Activated CD4-positive, alpha-beta T cell treated with anti-CD3 and anti-CD28 coated beads for 36 hours (primary cell): ENCODE measurements at regions of chr17 and their contacts with region 1.

Region 1: GRCh38 chr17:17641621-17642409 is 39.4 kb upstream of the RAI1 start:
- DNase-seq: peak; percentile 90
- ATAC-seq: peak; percentile 96
- H3K4me3 Mint-ChIP-seq: no peak overlapping the region
- H3K27ac Mint-ChIP-seq: no peak overlapping the region
- H3K4me1 Mint-ChIP-seq: no peaks in the 10 kb centered on the region
- H3K27me3 Mint-ChIP-seq: no peaks in the 10 kb centered on the region

Region 2: GRCh38 chr17:17001874-17002520 is 639.8 kb before region 1 on chr17:
- CTCF ChIA-PET with region 1: no interaction called
- POLR2A ChIA-PET with region 1: no interaction called
- intact Hi-C with region 1: loop called in 1 of 2 experiments (anchors 5 kb)
- DNase-seq: peak; percentile 88
- ATAC-seq: peak; percentile 98
- H3K4me3 Mint-ChIP-seq: no peak overlapping the region
- H3K27ac Mint-ChIP-seq: no peak overlapping the region
- H3K4me1 Mint-ChIP-seq: no peaks in the 10 kb centered on the region
- H3K27me3 Mint-ChIP-seq: no peaks in the 10 kb centered on the region

Region 3: DNA sequence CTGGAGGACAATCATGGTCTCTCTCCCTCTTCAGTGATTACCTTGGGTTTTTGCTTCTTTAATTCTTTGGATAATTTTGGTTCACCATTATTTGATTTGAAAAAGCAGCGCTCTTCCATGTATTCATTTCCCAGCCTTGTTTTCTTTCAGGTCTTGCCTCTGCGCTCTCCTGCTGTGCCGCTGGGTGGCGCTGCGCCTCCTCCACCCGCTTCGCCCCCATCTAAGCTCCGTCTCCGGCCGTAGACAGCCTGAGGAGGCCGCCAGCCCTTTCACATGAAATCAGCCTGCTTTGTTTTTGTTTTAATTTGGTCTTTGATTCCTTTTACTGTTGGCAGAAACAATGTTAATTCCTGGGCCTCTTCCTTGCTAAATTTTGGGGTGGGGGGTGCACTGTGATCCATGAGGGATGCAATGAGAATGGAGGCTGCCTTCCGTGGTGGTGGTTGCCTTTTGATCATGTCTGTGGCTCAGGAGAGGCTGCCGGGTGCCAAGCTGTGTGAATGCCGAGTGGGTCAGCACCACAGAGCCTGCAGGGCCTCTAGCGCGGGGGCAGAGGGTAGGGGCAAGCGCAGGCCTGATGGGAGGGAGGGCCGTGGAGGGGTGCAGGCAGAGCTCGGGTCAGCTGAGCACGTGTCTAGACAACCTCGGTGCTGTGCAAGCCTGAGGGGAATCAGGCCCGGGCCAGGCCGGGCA is 499.8 kb before region 1 on chr17:
- CTCF ChIA-PET with region 1: no interaction called
- POLR2A ChIA-PET with region 1: no interaction called
- intact Hi-C with region 1: no loop called
- DNase-seq: peak; percentile 76
- ATAC-seq: peak; percentile 59
- H3K4me3 Mint-ChIP-seq: no peak overlapping the region
- H3K27ac Mint-ChIP-seq: peak overlapping the region; percentile 72
- H3K4me1 Mint-ChIP-seq: peaks cover 17% of the 10 kb centered on the region
- H3K27me3 Mint-ChIP-seq: no peaks in the 10 kb centered on the region

Region 4: GRCh38 chr17:17440010-17440843 is 201.6 kb before region 1 on chr17:
- CTCF ChIA-PET with region 1: interaction called, 6 read pairs
- POLR2A ChIA-PET with region 1: no interaction called
- intact Hi-C with region 1: loop called (anchors 2 to 5 kb)
- DNase-seq: peak; percentile 86
- ATAC-seq: peak; percentile 84
- H3K4me3 Mint-ChIP-seq: no peak overlapping the region
- H3K27ac Mint-ChIP-seq: no peak overlapping the region
- H3K4me1 Mint-ChIP-seq: peaks cover 2% of the 10 kb centered on the region
- H3K27me3 Mint-ChIP-seq: no peaks in the 10 kb centered on the region

Region 5: GRCh38 chr17:17484451-17484899 is 157.3 kb before region 1 on chr17:
- CTCF ChIA-PET with region 1: no interaction called
- POLR2A ChIA-PET with region 1: no interaction called
- intact Hi-C with region 1: loop called in 1 of 2 experiments (anchors 5 kb)
- DNase-seq: peak; percentile 84
- ATAC-seq: peak; percentile 100
- H3K4me3 Mint-ChIP-seq: no peak overlapping the region
- H3K27ac Mint-ChIP-seq: peak overlapping the region; percentile 68
- H3K4me1 Mint-ChIP-seq: peaks cover 64% of the 10 kb centered on the region
- H3K27me3 Mint-ChIP-seq: no peaks in the 10 kb centered on the region

Region 6: GRCh38 chr17:17628388-17629008 is 13.3 kb before region 1 on chr17:
- CTCF ChIA-PET with region 1: interaction called, 14 read pairs
- POLR2A ChIA-PET with region 1: no interaction called
- intact Hi-C with region 1: no loop called
- DNase-seq: peak; percentile 66
- ATAC-seq: peak; percentile 88
- H3K4me3 Mint-ChIP-seq: peak overlapping the region; percentile 70
- H3K27ac Mint-ChIP-seq: peak overlapping the region; percentile 86
- H3K4me1 Mint-ChIP-seq: peaks cover 11% of the 10 kb centered on the region
- H3K27me3 Mint-ChIP-seq: no peaks in the 10 kb centered on the region

Region 7: DNA sequence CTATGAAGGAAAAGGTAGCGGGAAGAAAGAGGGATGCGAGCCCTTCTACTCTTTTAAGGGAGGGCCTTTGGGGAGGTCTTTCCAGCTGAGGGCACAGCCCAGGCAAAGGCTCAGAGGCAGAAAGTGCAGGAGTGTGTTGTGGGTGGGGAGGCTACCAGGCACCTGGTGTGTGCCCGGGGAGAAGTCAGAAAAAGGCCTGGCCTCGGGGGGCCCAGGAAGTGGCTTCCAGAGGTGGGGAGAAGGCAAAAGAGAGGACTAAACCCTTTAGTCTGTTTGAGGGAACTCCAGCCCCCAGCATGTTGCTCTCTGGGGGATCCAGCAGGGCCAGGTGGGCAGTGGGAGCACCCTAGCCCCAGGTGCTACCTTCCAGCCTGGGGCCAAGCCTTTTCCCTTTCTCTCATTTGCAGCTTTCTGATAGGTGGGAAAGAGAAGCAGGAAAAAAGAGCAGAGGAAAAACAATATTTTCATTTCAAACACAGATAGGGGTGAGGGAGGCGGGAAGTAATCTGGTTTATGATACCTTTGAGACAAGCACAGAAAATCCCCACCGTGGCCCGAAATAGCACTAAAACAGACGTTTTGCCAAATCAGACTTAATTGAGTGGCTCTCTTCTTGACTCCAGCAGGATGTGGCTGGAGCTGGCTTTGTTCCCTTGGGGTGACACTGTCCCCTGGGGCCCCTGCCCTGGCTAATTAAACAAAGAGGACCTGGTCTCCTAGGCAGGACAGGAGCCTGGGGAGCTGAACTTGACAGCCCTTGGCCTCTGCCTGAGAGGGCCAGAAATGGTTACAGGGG is 49.9 kb after region 1 on chr17:
- CTCF ChIA-PET with region 1: no interaction called
- POLR2A ChIA-PET with region 1: no interaction called
- intact Hi-C with region 1: no loop called
- DNase-seq: peak; percentile 33
- ATAC-seq: no peak
- H3K4me3 Mint-ChIP-seq: no peak overlapping the region
- H3K27ac Mint-ChIP-seq: peak overlapping the region; percentile 76
- H3K4me1 Mint-ChIP-seq: peaks cover 60% of the 10 kb centered on the region
- H3K27me3 Mint-ChIP-seq: no peaks in the 10 kb centered on the region